GM10248 (cell line): ENCODE measurements at regions of chr2 and their contacts with region 1.

Region 1: GRCh38 chr2:106160786-106161261 is 33.3 kb downstream of the UXS1 start:
- DNase-seq: no peak
- CTCF ChIP-seq: no peak

Region 2: GRCh38 chr2:106147159-106147558 is 13.7 kb before region 1 on chr2:
- CTCF ChIA-PET with region 1: interaction called, 16 read pairs
- POLR2A ChIA-PET with region 1: interaction called, 3 read pairs
- DNase-seq: no peak
- CTCF ChIP-seq: no peak

Region 3: DNA sequence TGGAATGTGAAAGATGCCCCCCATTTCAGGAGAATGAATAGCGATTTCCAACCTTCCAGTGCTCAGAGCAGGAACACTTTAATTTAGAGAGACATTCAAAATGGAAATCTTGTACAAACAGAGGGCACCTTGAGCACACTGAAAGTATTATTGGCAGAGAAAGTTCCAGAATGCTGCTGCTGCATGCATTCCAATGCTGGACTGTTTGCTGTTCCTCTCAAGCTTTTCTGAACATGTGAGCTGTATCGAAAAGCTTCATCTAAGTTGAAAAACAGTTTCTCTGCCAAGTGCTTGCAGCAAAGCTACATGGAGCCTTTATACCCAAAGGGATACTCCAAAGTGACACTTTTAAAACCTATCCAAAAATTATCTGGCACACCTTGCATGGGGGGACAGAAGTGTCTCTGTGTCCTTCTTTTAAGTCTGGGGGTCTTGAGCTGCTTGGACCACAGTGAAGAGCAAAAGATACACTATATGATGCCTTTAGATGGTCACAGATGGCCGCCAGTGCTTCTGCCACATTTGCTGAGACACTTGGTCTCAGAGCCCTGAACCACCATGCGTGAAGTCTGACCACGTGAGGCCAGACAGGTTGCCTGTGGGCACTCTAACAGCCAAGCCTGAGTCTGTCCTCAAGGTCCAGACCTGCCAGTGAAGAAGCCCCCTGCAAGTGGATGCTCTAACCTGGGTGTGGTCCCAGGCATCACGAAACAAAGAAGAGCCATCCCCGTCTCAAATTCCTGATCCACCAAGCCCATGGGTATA is 14.4 kb after region 1 on chr2:
- CTCF ChIA-PET with region 1: interaction called, 11 read pairs
- POLR2A ChIA-PET with region 1: no interaction called
- DNase-seq: no peak
- CTCF ChIP-seq: no peak

Region 4: GRCh38 chr2:106183101-106183696 is 22.4 kb after region 1 on chr2:
- CTCF ChIA-PET with region 1: interaction called, 16 read pairs
- POLR2A ChIA-PET with region 1: no interaction called
- DNase-seq: no peak
- CTCF ChIP-seq: no peak